ENCODE measurements at regions of chr11 and their contacts with region 1.

Region 1: DNA sequence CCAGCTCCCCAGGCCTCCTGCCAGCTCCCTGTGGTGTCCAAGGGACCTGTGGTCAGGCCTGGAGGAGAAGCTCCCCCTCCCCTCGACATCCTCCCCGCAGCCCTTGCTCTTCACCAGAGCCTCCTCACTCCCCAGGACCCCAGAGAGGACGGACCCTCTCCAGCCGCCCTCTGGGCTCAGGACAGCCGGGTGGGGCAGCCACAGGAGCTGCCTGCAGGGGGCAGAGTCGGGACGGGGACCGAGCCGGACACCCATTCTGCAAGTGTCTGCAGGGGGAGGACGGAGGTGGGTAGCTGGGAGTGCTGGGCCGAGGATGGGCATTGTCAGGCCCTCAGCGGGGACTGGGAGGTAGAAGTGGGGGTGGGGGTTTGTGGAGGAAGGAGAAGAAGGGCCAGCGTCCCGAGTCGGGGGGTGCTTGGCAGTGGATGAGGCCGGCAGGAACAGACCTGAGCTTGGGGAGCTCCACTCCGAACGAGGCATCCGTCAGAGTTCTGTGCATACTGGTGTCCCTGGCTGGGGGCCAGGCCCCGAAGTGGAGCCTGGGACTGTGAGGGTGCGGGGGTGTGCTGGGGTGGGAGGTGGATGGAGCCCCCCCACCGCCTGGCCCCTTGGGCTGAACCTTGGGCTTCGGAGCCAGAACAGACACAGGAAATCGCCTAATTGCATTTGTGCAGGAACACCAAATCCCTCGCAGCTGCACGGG is 15.2 kb downstream of the PRR33 start:
- DNase-seq: peak; percentile 48 to 80
- ATAC-seq: peak; percentile 57 to 79; a peak in 4 of 6 replicates
- H3K4me3 ChIP-seq: no peak overlapping the region
- H3K27ac ChIP-seq: peak overlapping the region in 1 of 2 experiments; percentile 65; a peak in 3 of 6 replicates
- H3K4me1 ChIP-seq: peaks cover 19% of the 10 kb centered on the region; the same call in 2 of the 3 replicates
- CTCF ChIP-seq: peak; percentile 61
- EP300 ChIP-seq: no peak
- POLR2A ChIP-seq: no peak
- RAD21 ChIP-seq: peak; percentile 40 to 44; a peak in 4 of 5 replicates

Region 2: DNA sequence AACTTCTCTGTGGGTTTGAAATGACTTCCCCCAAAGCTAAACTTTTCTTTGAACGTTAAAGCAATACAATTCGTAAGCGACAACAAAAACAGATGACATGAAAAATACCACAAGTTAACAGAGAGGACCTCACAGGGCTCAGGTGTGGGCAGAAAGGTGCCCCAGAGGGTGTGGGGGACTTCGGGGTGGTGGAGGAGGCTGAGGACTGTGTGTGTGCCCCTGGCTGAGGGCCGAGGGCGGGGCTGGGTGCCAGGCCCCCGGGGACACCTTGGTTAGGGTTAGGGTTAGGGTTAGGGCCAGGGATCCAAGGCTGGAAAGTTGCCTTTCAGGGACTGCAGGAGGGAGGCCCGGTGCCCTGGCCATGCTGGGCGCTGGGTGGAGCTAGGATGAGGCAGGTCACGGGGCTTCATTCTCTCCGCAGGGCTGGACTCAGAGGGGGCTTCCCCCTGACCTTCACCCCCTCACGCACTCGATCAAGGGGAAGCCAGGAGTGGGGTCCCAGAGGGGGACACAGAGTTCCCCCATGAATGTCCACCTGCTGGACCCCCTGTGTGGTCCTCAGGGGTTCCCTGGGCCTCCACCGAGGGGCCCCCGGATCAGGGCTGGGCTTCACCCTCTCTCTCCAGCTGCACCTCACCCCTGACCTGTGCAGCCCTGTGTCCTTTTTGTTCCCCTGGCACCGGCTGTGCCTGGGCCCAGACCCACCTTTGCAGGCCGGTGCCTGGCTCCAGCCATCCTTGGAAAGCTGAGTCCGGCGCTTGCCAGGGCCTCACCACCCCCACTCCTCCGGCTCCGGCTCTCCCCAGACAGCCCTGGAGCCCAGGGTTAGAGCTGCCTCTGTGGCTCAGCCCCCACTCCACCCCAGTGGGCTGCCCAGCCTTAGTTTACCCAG is 30.7 kb before region 1 on chr11:
- CTCF ChIA-PET with region 1: interaction called, 30 read pairs
- POLR2A ChIA-PET with region 1: no interaction called
- DNase-seq: no peak
- ATAC-seq: no peak
- H3K4me3 ChIP-seq: no peak overlapping the region
- H3K27ac ChIP-seq: no peak overlapping the region
- H3K4me1 ChIP-seq: peaks cover 7% of the 10 kb centered on the region
- CTCF ChIP-seq: no peak
- EP300 ChIP-seq: no peak
- POLR2A ChIP-seq: no peak
- RAD21 ChIP-seq: no peak

Region 3: DNA sequence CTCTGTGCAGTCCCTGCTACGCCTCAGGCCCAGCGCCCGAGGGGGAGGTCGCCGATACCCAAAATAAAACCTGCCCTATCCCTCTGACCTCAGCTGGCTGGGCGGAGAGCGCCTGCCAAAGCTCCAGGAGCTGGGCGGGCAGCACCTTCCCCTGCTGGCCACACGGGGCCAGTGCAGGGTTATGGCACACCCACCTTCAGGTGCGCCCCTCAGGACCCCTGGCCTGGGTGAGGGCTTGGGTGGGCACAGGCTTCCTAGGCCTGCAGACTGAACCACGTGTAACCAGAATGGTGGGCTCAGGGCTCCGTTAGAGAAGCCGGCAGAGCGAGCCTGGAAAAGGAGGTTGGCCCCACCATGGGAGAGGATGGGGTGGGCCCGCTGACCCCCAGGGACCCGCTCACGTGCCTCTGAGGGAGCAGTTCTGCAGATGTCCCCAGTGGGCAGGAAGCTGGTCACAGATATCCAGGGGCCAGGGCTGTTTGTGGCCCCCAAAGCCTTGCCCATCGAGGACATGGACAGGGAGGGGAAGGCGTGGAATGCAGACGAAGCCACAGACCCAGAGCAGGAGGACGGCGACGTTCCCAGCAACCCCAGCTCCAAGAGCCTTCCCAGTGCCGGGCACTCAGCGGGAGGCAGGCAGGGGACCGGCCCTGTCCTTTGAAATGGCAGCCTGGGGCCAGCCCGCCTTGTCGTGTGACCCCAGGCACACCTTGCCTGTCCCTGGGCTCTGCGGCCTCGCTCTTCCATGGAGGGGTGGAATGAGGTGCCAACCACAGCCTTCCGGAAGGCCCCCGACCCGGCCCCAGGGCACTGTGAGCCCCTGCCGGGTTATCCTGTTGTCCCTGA is 41.4 kb after region 1 on chr11:
- CTCF ChIA-PET with region 1: interaction called, 65 read pairs
- POLR2A ChIA-PET with region 1: no interaction called
- DNase-seq: no peak
- ATAC-seq: peak; percentile 52 to 76; a peak in 5 of 6 replicates
- H3K4me3 ChIP-seq: no peak overlapping the region
- H3K27ac ChIP-seq: no peak overlapping the region
- H3K4me1 ChIP-seq: no peaks in the 10 kb centered on the region
- CTCF ChIP-seq: no peak
- EP300 ChIP-seq: no peak
- POLR2A ChIP-seq: no peak
- RAD21 ChIP-seq: no peak

Region 4: GRCh38 chr11:1943977-1944376 is 67.5 kb after region 1 on chr11:
- CTCF ChIA-PET with region 1: interaction called, 49 read pairs
- POLR2A ChIA-PET with region 1: no interaction called
- DNase-seq: no peak
- ATAC-seq: no peak; a peak in 1 of 6 replicates
- H3K4me3 ChIP-seq: no peak overlapping the region
- H3K27ac ChIP-seq: no peak overlapping the region
- H3K4me1 ChIP-seq: no peaks in the 10 kb centered on the region
- CTCF ChIP-seq: no peak
- EP300 ChIP-seq: no peak
- POLR2A ChIP-seq: no peak
- RAD21 ChIP-seq: no peak